CD4-positive, alpha-beta memory T cell (primary cell): ENCODE measurements at regions of chr4 and their contacts with region 1.

Region 1: DNA sequence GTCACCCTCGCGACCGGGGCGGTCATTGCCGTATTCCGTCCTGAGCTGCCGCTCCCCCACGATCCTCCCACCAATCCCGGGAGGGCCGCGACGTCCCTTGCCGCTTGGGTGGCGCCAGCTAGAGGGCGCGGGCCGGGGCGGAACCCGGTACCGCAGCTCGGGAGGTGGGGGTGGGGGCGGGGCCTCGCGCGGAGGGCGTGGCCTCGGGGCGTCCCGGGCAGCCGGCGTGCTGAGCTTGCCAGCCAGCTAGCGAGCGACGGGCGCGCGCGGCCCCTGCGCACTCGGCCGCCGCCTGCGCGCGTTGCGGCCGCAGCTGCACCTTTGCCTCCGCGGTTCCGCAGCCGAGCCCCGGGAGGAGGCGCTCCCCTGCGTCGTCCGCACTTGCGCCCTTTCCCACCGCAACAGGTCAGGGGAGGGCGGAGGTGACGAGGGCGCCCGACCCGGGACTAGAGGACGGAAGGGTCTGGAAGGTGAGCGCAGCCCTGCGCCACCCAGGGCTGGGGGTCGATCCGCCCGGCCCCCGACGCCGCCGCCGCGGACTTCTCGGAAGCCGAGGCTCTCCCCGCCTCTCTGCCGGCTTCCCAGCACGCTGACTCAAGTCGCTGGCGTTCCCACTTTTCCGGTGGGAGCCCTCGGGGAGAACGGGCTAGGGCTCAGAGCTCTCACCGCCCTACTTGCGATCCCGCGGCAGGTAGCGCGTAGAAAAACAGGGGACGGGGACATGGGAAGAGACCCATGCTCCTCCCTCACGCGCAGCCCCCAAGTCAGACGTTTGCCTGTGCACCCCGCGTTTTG is at the start of gene AFF1:
- DNase-seq: peak; percentile 85 to 90 (median 87)
- H3K4me3 ChIP-seq: peak within 1 kb of the TSS; percentile 70 to 80
- H3K4me3 Mint-ChIP-seq: peak within 1 kb of the TSS; percentile 89 to 97 (median 94)
- H3K27ac ChIP-seq: peak within 1 kb of the TSS; percentile 84
- H3K27ac Mint-ChIP-seq: peak within 1 kb of the TSS; percentile 94 to 98 (median 97)
- H3K4me1 ChIP-seq: peaks cover 48% of the 10 kb centered on the region
- H3K4me1 Mint-ChIP-seq: peaks cover 38 to 58% (median 46%) of the 10 kb centered on the region in 4 donors
- H3K27me3 ChIP-seq: no peaks in the 10 kb centered on the region
- H3K27me3 Mint-ChIP-seq: no peaks in the 10 kb centered on the region
- total RNA-seq, gene AFF1: 105 to 108 TPM

Region 2: GRCh38 chr4:86921608-86922252 is 13.2 kb before region 1 on chr4:
- CTCF ChIA-PET with region 1: interaction called, 118 read pairs
- POLR2A ChIA-PET with region 1: interaction called, 23 read pairs
- intact Hi-C with region 1: loop called (anchors 1 kb)
- DNase-seq: no peak
- H3K4me3 ChIP-seq: no peak overlapping the region
- H3K4me3 Mint-ChIP-seq: no peak overlapping the region
- H3K27ac ChIP-seq: no peak overlapping the region
- H3K27ac Mint-ChIP-seq: no peak overlapping the region
- H3K4me1 ChIP-seq: no peaks in the 10 kb centered on the region
- H3K4me1 Mint-ChIP-seq: peaks cover 0 to 4% (median 2%) of the 10 kb centered on the region in 4 donors
- H3K27me3 ChIP-seq: no peaks in the 10 kb centered on the region
- H3K27me3 Mint-ChIP-seq: no peaks in the 10 kb centered on the region

Region 3: GRCh38 chr4:86977621-86978184 is 42.7 kb after region 1 on chr4:
- CTCF ChIA-PET with region 1: interaction called, 10 read pairs
- POLR2A ChIA-PET with region 1: interaction called, 3 read pairs
- intact Hi-C with region 1: no loop called
- DNase-seq: peak in 1 of 5 donors; percentile 10
- H3K4me3 ChIP-seq: no peak overlapping the region
- H3K4me3 Mint-ChIP-seq: peak overlapping the region in 3 of 8 donors; percentile 1 to 62 (median 60)
- H3K27ac ChIP-seq: no peak overlapping the region
- H3K27ac Mint-ChIP-seq: peak overlapping the region in 6 of 7 donors; percentile 22 to 83 (median 70)
- H3K4me1 ChIP-seq: peaks cover 57% of the 10 kb centered on the region
- H3K4me1 Mint-ChIP-seq: peaks cover 48 to 85% (median 69%) of the 10 kb centered on the region in 4 donors
- H3K27me3 ChIP-seq: no peaks in the 10 kb centered on the region
- H3K27me3 Mint-ChIP-seq: no peaks in the 10 kb centered on the region

Region 4: GRCh38 chr4:87093443-87094123 is 158.6 kb after region 1 on chr4:
- CTCF ChIA-PET with region 1: interaction called, 47 read pairs
- POLR2A ChIA-PET with region 1: interaction called, 25 read pairs
- intact Hi-C with region 1: loop called (anchors 1 kb)
- DNase-seq: peak; percentile 38 to 61 (median 46)
- H3K4me3 ChIP-seq: no peak overlapping the region
- H3K4me3 Mint-ChIP-seq: no peak overlapping the region
- H3K27ac ChIP-seq: no peak overlapping the region
- H3K27ac Mint-ChIP-seq: peak overlapping the region; percentile 33 to 91 (median 82)
- H3K4me1 ChIP-seq: peaks cover 20% of the 10 kb centered on the region
- H3K4me1 Mint-ChIP-seq: peaks cover 17 to 29% (median 24%) of the 10 kb centered on the region in 4 donors
- H3K27me3 ChIP-seq: no peaks in the 10 kb centered on the region
- H3K27me3 Mint-ChIP-seq: no peaks in the 10 kb centered on the region

Region 5: DNA sequence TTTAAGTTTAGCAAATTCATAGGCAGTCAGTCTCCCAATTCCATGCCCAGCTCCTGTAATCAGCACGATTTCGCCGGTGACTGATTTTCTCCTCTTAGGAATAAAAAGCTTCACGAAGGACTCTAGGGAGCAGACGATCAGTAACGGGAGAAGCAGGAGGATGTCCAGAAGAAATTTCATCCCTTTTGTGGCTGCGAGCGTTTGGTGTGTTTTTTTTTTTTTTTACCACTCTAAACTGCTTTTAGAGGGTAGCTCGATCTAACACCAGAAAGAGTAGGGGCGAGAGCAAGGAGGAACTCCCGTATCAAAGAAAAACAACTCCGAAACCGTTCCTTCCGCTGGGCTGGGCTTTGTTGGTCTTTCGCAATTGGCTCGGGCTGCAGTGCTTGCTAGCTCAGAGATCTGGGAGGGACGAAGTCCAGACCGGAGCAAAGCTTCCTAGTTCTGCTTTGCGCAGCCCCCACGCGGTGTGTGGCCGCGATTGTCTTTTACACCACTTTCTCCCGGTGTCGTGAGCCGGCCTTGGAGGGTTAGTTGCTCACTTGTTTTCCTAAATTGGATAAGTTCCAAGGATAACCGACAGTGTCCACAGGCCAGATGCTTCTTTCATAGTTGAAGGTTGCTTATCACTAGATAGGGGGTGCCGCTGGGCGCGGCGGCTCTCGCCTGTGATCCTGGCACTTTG is 456.1 kb after region 1 on chr4 and contains the start of gene HSD17B11:
- CTCF ChIA-PET with region 1: no interaction called
- POLR2A ChIA-PET with region 1: interaction called, 7 read pairs
- intact Hi-C with region 1: loop called (anchors 2 kb)
- DNase-seq: peak; percentile 80 to 88 (median 83)
- H3K4me3 ChIP-seq: peak within 1 kb of the TSS; percentile 87 to 90
- H3K4me3 Mint-ChIP-seq: peak within 1 kb of the TSS; percentile 89 to 99 (median 96)
- H3K27ac ChIP-seq: peak within 1 kb of the TSS; percentile 74
- H3K27ac Mint-ChIP-seq: peak within 1 kb of the TSS; percentile 82 to 98 (median 94)
- H3K4me1 ChIP-seq: peaks cover 41% of the 10 kb centered on the region
- H3K4me1 Mint-ChIP-seq: peaks cover 31 to 50% (median 42%) of the 10 kb centered on the region in 4 donors
- H3K27me3 ChIP-seq: no peaks in the 10 kb centered on the region
- H3K27me3 Mint-ChIP-seq: no peaks in the 10 kb centered on the region
- total RNA-seq, gene HSD17B11: 69.7 to 69.8 TPM

Region 6: DNA sequence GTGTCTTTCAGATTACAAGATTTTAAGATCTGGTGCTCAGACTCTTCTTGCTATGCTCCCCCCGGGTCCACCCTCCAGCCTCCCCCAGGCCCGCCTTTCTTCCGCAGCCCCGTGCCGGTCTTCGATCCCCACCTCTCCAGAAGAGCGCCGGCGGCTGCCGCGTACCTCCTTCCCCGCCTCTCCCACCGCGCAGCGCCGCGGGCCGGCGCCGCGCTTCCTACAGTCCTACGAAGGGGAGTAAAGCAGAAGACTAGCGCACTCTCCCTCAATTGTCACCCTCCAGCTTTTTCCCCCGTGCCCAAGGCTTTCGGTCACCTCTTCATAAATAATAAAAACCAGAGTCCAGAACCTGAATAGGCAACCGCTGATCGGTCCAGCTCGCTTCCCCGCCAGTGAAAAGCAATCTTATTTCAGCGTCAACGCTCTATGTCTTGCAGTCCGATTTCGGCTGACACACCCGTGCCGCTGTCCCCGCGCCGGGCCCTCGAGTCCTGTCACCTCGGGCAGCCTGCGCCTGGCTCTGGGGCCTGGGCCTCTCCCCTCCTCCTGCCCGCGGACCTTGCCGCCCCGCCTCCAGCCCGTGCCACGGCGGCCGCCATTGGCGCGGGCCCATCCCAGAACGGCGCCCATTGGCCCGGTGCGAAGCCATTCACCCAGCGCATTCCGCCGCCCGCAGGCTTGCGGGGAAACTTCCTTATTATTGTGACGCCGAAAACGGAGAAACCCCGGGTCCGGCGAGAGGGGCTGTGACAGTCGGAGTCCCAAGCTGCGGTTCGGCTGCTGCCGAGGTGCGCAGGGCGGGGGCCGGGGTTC is 1657.0 kb after region 1 on chr4 and contains the start of gene HERC3:
- CTCF ChIA-PET with region 1: no interaction called
- POLR2A ChIA-PET with region 1: no interaction called
- intact Hi-C with region 1: loop called (anchors 5 kb)
- DNase-seq: peak; percentile 87 to 91 (median 90)
- H3K4me3 ChIP-seq: peak within 1 kb of the TSS; percentile 33 to 74
- H3K4me3 Mint-ChIP-seq: peak within 1 kb of the TSS; percentile 95 to 99 (median 98)
- H3K27ac ChIP-seq: peak within 1 kb of the TSS; percentile 89
- H3K27ac Mint-ChIP-seq: peak within 1 kb of the TSS; percentile 96 to 99 (median 99)
- H3K4me1 ChIP-seq: peaks cover 32% of the 10 kb centered on the region
- H3K4me1 Mint-ChIP-seq: peaks cover 29 to 54% (median 37%) of the 10 kb centered on the region in 4 donors
- H3K27me3 ChIP-seq: no peaks in the 10 kb centered on the region
- H3K27me3 Mint-ChIP-seq: no peaks in the 10 kb centered on the region
- total RNA-seq, gene HERC3: 95.5 to 97.1 TPM